HEK293T (cell line): ENCODE measurements at regions of chr1 and their contacts with region 1.

Region 1: DNA sequence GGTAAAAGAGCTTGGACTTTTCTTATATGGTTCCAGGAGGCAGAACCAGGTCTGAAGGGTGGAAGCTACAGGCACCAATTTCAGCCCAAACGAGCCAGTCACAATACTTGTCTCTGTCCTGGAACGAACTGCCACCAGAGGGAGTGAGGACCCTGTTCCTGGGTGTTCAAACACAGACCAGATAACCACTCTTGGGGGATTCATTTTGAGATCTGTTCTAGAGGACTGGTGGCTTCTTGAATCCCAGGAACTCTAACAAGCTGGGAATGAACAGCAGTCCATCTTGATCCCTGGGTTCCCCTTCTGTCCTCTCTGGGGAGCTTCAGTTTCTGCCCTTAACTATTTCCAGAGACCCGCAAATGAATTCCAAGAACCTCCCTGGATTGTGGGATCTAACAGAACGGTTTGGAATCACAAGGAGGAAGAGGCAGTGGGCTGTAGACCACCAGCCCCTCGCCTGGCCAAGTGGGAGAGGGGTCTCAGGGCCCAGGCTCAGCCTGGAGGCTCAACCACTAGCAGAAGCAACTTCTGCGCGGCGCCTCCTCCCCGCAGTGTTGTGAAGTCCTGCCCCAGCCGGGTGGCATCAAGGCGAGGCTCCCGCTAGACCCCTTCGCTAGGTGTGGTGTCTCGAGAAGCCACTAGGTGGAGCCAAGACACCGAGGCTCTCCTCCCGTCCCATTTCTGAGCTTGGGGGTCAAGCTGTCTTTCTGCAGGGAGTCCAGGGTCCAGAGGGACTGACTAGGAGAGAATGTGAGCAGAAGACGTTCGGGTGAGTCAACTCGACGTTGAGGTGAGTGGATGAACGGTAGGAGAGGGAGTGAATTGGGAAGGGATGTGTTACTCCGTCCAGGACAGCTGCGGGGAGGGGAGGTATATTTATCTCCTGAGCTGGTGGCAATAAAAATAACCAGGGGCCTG is 12.1 kb upstream of the NES start:
- DNase-seq: peak; percentile 92

Region 2: DNA sequence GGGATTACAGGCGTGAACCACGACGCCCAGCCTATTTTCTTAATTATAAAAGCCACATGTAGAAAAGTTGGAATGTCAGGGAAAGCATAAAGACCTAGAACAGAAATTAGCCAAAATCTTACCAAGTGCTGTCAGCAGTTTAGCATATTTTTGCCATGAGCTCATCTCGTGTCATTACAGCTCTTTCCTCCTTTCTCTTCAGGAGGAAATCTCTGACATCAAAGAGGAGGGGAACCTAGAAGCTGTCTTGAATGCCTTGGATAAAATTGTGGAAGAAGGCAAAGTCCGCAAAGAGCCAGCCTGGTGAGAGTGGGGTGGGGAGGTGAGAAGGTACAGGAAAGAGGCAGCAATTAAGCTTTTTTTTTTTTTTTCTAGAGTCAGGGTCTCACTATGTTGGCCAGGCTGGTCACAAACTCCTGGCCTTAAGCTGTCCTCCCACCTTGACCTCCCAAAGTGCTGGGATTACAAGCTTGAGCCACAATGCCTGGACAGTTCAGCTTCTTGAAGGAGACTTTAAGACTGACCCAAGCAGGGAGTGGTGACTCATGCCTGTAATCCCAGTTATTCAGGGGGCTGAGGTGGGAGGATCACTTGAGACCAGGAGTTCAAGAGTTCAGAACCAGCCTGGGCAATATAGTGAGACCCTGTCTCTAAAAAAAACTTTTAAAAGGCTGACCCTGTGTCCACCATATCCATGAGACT is 455.7 kb before region 1 on chr1:
- CTCF ChIA-PET with region 1: no interaction called
- POLR2A ChIA-PET with region 1: no interaction called
- DNase-seq: no peak

Region 3: DNA sequence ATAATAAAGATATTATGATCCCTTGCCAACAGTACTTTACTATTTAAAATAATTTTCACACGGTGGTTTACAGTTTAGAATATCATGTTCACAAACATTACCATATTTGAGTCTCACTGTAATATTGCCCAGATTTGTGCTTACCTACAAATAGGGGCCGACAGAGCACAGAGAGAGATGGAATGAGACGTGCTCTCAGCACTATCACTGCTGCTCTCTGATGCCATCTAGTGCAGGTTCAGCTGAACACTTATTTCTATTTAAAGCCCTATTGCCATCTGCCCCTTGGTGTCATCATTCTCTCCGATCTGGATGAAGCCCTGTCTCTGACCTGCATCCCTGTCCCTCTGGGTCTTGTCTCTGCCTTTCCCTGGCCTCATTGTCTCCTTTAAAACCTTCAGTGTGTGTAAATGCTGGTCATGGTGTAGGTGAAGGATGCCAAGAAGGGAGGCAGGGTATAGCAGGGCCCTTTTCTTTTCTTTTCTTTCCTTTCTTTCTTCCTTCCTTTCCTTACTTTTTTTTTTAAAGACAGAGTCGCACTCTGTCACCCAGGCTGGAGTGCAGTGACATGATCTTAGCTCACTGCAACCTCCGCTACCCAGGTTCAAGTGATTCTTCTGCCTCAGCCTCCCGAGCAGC is 81.1 kb before region 1 on chr1:
- CTCF ChIA-PET with region 1: no interaction called
- POLR2A ChIA-PET with region 1: no interaction called
- DNase-seq: peak; percentile 78

Region 4: DNA sequence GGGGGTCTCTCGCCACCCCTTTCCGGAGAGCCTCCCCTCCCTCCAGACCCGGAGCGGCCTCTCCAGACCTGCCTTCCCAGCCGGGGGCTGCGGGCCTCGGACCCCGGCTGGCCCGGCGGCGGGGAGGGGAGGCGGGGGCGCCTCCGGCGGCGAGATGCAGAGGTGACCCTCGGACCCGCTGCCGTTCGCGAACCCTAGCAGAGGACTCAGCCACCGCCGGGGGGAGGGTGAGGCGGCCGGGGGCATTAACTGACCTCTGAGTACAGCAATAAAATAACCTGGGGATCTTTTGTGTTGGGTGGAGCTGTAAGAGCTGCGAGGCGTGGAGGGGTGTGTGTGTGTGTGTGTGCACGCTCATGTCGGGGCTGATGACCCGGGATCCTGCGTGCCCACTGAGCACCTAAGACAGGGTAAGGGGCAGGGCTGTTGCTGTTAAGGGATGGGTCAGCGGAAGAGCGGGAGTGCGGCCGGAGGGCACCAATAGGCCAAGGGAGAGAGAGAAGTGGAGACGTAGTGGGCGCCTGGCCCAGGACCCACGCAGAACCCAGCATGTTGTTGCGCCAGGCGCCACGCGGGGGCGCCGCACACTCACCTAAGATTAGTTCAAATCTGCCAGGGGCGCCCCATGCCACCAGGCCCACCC is 63.7 kb before region 1 on chr1:
- CTCF ChIA-PET with region 1: interaction called, 12 read pairs
- POLR2A ChIA-PET with region 1: interaction called, 7 read pairs
- DNase-seq: peak; percentile 73

Region 5: GRCh38 chr1:156667610-156667967 is 21.7 kb before region 1 on chr1:
- CTCF ChIA-PET with region 1: interaction called, 22 read pairs
- POLR2A ChIA-PET with region 1: interaction called, 4 read pairs
- DNase-seq: no peak

Region 6: GRCh38 chr1:156705918-156706656 is 16.8 kb after region 1 on chr1:
- CTCF ChIA-PET with region 1: interaction called, 429 read pairs
- POLR2A ChIA-PET with region 1: interaction called, 120 read pairs
- DNase-seq: peak; percentile 87

Region 7: DNA sequence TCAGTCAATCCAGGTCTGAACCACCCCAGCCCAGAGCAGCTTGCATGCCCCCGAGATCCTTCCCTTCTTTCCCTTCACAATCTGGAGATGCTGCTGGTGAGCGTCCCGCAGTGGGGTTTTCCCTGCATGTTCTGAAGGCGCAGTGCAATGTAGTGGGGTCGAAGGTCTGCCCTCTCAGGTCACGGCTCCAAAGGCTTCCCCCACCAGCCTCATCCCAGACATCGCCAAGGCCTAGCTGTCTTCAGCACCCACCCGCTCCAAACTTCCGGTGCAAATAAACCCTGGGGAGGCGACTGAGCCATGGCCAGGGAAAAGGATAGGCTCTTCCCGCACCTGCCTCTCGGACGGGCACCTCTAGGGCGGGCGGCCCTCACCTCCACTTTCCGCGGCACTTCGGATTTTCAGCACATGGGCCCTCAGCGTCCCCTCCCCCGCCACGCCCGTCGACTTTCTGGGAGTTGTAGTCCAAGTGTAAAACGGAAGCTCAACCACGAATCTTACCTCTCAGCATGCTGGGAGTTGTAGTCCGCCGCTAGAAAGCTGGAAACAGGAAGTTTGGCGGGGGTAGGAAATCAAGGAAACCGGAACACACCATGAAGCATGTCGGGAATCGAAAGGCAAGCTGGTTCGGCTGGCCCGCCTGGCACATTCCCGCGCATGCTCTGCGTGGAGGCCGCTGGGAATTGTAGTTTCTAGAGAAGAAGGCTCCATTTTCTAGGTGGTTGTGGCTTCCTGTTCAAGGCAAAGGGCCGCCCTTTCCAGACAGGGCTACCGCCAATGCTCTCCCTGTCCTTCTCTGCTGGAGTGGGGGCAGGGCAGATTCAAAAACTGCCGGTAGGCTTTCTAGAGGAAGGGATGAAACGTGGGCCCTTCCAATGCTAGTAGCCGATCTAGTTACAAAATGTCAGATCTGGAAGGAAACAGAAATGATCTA is 51.7 kb after region 1 on chr1 and contains the start of gene MRPL24:
- CTCF ChIA-PET with region 1: interaction called, 12 read pairs
- POLR2A ChIA-PET with region 1: interaction called, 4 read pairs
- DNase-seq: peak; percentile 98

Region 8: DNA sequence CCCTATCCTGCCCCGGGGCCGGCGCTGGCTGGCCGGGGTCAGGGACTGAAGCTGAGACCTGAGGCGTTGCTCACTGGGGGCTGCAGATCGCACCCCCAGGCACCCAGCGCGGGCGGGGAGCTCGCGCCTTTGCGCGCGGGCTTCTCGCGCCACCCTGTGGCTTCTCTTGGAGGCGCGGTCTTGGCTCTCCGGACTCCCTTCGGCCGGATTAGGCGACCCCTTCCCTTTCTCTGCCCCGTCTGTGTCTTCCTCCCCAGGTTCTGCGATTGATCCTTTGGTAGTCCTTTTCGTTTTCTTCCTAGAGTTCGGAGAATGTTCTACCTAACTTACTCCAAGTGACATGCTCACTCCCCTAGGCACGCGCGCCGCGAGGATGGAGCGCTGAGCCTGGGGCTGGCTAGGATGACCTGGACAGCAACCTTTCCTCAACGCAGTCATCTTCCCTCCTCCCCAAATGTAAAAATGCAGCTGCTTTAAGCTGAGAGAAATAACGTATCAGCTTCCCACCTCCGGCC is 170.9 kb after region 1 on chr1:
- CTCF ChIA-PET with region 1: interaction called, 35 read pairs
- POLR2A ChIA-PET with region 1: no interaction called
- DNase-seq: peak; percentile 86

Region 9: GRCh38 chr1:156892190-156893047 is 203.1 kb after region 1 on chr1:
- CTCF ChIA-PET with region 1: interaction called, 38 read pairs
- POLR2A ChIA-PET with region 1: no interaction called
- DNase-seq: peak; percentile 96

Region 10: DNA sequence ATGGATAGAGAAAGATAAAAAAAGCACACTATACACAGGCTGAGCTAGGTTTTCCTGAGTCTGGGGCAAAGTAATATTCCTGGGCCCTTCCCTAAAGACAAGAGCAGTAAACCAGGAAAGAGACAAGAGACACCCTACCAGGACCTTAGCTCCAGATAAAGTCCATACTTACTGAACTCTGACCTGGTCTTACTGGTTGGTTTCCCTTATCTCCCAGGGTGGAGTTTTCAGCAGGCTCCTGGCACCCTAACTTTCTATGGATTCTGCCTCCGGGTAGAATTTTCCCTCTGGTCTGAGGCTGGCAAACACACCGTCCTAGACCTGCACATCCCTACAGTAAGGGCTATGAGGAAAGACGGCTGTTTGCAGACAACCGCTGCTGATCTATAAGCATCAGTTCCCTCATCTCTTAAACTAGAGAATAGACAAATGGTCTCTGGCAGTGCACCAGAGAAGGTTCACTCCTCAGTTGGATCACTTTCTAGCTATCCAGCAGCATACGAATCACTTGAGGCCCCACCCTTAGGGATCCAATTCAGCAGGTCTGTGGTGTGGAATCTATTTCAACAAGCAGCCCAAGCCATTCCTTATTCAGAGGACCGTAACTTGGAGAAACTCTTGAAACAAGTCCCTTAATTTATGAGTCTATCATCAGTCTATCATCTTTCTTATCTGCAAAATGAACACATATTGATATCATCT is 304.3 kb after region 1 on chr1:
- CTCF ChIA-PET with region 1: no interaction called
- POLR2A ChIA-PET with region 1: no interaction called
- DNase-seq: no peak